A673 (cell line): ENCODE measurements at regions of chr9 and their contacts with region 1.

Region 1: GRCh38 chr9:104386425-104387069 is 117.5 kb upstream of the OR13F1 start:
- DNase-seq: peak; percentile 49
- H3K4me3 ChIP-seq: no peak overlapping the region
- H3K27ac ChIP-seq: no peak overlapping the region
- H3K4me1 ChIP-seq: no peaks in the 10 kb centered on the region
- H3K27me3 ChIP-seq: no peaks in the 10 kb centered on the region
- CTCF ChIP-seq: peak; percentile 67

Region 2: DNA sequence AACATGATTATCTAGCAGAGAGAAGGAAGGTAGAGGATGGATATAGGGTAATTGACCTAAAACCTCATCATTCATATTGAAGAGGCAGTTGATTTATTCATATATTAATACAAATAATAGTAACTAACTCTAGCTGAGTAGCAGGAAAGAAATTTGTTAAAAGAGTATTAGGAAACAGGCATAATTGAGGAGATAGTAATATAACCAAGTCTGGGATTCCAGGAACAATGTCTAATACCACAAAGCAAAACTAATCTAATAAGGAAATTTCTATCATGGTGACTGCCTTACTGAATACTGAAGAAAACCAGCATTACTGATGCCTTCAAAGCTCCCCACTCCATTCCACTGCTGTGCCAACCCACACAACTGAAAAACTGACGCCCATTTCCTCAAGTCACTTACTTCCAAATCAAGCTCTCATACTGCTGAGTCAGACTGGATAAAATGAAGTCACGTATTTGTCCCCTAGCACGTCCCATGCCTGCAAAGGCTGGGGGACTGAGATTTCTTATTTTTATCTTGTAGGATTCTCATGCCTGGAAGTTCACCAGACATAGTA is 138.6 kb before region 1 on chr9:
- CTCF ChIA-PET with region 1: no interaction called
- POLR2A ChIA-PET with region 1: no interaction called
- intact Hi-C with region 1: loop called (anchors 5 kb)
- DNase-seq: no peak
- H3K4me3 ChIP-seq: no peak overlapping the region
- H3K27ac ChIP-seq: no peak overlapping the region
- H3K4me1 ChIP-seq: no peaks in the 10 kb centered on the region
- H3K27me3 ChIP-seq: no peaks in the 10 kb centered on the region
- CTCF ChIP-seq: no peak